BJ (cell line): ENCODE measurements at regions of chr7 and their contacts with region 1.

Region 1: GRCh38 chr7:91880413-91881241 is at the start of gene MTERF1:
- DNase-seq: peak; percentile 30
- H3K4me3 ChIP-seq: peak within 1 kb of the TSS; percentile 90
- H3K27me3 ChIP-seq: no peaks in the 10 kb centered on the region
- CTCF ChIP-seq: peak; percentile 97
- polyA plus RNA-seq, gene MTERF1: 3.6 and 7.1 TPM in 2 replicates

Region 2: GRCh38 chr7:91771921-91772815 is 108.5 kb before region 1 on chr7:
- CTCF ChIA-PET with region 1: no interaction called
- POLR2A ChIA-PET with region 1: no interaction called
- DNase-seq: no peak
- H3K4me3 ChIP-seq: no peak overlapping the region
- H3K27me3 ChIP-seq: no peaks in the 10 kb centered on the region
- CTCF ChIP-seq: no peak

Region 3: DNA sequence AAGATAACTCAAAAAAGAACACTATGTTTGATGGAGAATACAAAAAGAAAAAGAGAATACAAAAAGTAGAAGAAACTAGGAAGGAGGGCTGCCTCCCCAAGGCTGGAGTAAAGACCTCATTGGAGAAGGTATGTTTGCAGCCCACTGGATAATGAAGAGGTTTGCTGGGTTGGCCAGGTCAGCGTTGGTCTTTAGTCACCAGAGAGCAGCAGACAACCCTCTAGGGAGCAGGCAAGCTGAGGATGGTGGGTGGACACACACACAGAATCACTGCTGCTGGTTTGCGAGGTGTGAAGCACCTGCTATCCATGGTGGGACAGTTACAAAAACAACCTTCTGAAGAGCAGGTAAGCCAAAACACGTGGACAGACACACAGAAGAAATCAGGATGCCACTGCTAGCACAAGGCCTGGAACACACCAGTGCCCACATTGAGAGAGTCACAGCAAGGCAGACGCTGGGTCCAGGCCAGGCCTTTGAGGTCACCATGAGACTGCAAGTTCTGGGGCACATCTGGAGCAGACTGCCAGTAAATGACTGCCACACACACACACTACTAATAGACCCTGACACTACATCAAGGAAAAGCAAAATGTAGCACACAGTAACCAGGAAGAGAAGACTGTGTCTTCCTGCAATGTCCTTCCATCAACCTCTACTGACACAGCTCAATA is 43.1 kb before region 1 on chr7:
- CTCF ChIA-PET with region 1: no interaction called
- POLR2A ChIA-PET with region 1: no interaction called
- DNase-seq: no peak
- H3K4me3 ChIP-seq: no peak overlapping the region
- H3K27me3 ChIP-seq: no peaks in the 10 kb centered on the region
- CTCF ChIP-seq: no peak

Region 4: DNA sequence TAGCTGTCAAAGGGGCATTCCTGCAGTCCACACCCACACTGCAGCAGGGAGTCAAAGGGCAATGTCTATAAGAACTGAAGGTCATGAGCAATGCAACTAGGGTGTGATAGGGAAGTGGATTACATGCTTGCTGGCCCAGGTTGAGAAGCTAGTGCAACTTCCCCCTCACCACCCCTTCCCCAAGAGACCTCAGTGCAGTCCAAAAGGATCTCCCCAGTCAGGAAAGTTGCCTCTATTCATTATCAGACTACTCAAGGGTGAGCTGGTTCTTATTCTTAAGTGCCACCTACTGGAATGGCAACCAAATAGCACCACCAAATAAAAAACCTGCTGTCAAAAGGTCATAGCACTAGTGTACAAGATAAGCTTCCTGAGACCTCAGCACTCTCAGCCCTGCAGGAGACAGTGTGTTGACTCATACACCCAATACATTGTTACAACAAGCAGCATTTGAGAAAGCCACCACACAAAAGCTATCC is 28.3 kb before region 1 on chr7:
- CTCF ChIA-PET with region 1: no interaction called
- POLR2A ChIA-PET with region 1: no interaction called
- DNase-seq: no peak
- H3K4me3 ChIP-seq: no peak overlapping the region
- H3K27me3 ChIP-seq: no peaks in the 10 kb centered on the region
- CTCF ChIP-seq: 0 out of 2 replicates have a peak, but pooled peaks have one; percentile 12

Region 5: GRCh38 chr7:91892821-91893340 is 12.3 kb after region 1 on chr7:
- CTCF ChIA-PET with region 1: interaction called, 16 read pairs
- POLR2A ChIA-PET with region 1: no interaction called
- DNase-seq: no peak
- H3K4me3 ChIP-seq: no peak overlapping the region
- H3K27me3 ChIP-seq: no peaks in the 10 kb centered on the region
- CTCF ChIP-seq: no peak